ENCODE measurements at regions of chr19 and their contacts with region 1.

Region 1: GRCh38 chr19:13055213-13056051 is 47.2 kb downstream of the LYL1 start:
- DNase-seq: no peak
- H3K4me3 ChIP-seq: no peak overlapping the region
- H3K4me1 ChIP-seq: peaks cover 16% of the 10 kb centered on the region
- H3K27me3 ChIP-seq: no peaks in the 10 kb centered on the region

Region 2: GRCh38 chr19:12983542-12984142 is 71.8 kb before region 1 on chr19:
- in situ Hi-C with region 1: loop called (anchors 5 kb)
- DNase-seq: peak; percentile 51 to 82
- H3K4me3 ChIP-seq: peak overlapping the region; percentile 22
- H3K4me1 ChIP-seq: peaks cover 5% of the 10 kb centered on the region; the same call in 1 of the 2 replicates
- H3K27me3 ChIP-seq: no peaks in the 10 kb centered on the region

Measured in HAP-1 (cell line).